Posterior vena cava (tissue), 2 donors: ENCODE measurements at regions of chr12 and their contacts with region 1.

Region 1: GRCh38 chr12:130904064-130904463 is 32.2 kb downstream of the RAN start:
- DNase-seq: no peak

Region 2: DNA sequence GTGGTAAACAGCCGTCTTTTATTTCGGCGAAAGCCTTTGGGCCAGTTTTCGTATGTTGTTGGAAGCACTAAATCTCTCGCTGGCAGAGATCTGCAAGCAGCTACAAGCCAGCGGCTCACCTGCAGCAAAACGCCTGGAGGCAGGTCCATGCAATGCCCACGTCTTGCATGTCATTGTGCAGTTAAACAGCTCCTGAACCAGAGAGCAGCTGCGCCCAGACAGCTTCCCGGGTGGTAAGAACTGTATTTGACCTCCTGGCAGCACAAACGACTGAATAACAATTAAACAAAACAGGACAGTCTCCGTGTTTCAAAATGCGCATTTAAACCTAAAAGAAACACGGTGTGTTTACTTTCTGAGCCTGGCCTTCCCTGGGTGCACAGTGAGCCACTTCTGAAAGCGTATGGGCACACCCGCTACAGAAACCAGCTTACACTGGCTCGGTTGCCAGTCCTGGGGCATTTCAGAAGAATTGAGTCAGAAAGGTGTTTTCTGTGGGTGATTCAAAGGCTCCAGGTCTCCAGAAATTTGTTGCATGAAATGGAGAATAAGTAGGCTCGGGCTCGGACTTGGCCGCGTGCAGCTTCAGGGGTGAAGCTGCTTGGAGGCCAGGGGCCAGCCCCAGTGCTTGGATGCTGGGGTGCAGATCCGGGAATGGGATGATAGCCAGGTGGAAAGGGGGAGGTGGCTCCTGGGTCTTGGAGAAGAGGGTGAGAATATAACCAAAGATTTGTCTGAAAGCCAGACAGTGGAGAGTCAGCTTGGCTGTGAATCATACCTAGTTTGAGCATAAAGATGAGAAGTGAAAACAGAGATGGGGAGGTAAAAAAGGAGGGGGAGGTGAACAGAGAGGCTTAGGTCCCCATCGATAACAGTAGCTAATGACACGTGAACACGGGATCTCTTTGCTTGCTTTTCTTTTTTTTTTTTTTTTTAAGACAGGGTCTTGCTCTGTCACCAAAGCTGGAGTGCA is 766.7 kb before region 1 on chr12:
- intact Hi-C with region 1: no loop called
- DNase-seq: no peak

Region 3: GRCh38 chr12:130764475-130765185 is 139.4 kb before region 1 on chr12:
- intact Hi-C with region 1: no loop called
- DNase-seq: no peak

Region 4: DNA sequence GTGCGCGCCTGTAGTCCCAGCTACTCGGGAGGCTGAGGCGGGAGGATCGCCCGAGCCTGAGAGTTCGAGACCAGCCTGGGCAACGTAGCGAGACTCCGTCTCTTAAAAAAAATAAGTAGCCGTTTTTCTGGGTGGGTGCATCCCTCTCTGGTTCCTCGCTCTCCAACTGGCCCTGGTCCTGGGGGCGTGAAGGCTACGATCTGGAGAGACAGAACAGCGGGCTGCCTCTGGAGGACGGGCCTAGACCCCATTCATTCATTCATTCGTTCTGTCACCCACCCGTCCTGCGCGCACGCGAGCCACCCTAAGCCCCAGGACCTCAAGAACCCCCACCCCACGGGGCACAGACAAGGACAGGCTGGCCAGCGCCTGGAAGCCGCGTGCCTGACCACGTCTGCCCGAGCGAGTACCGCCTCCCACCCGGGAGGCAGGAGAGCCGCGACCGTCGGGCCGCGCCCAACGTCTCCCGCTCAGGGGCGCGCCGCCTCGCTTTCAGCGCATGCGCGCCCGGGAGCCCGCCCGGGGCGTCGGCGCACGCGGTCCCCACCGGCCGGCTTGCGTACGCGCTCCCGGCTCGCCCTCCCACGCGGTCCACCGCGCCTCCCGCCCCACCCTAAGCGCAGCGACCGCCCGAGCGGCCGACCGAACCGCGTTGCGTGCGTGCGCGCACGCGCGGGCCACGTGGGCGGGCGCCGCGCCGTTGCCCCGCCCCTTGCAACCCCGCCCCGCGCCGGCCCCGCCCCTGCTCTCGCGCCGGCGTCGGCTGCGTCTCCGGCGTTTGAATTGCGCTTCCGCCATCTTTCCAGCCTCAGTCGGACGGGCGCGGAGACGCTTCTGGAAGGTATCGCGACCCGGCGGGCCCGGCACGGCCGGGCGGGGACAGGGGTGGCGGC is 32.5 kb before region 1 on chr12 and contains the start of gene RAN:
- intact Hi-C with region 1: no loop called
- DNase-seq: peak; percentile 98
- total RNA-seq, gene RAN: 288 to 326 TPM

Region 5: GRCh38 chr12:131323879-131324278 is 419.8 kb after region 1 on chr12:
- intact Hi-C with region 1: no loop called
- DNase-seq: no peak

Region 6: DNA sequence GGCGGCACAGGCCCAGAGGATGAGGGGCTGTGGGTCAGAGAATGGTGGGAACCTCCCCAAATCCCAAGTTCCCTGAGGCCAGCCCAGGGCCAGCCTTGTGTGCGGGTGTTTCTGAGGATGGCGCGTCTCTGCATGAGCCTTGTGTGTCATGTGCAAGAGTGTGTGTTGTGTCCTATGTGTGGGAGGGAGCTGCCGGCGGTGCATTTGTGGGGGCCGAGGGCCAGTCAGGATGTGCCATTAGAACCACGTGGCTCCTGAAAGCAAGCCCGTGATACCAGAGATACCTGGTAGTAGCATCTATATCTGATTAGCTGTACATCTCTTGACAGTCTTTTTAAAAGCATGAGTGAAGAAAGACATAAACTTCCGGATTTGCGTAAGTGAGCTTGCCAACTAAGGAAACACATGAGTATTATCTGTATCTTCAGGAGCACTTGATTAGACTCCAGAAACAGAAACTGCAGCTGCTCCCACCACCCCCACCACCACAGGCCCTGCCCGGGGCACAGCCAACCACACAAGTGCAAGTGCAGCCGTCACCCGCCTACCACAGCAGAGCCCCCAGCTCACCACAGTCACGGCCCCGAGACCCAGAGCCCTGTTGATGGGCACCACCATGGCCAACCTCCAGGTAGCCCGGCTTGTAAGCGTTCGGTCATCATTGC is 1220.8 kb after region 1 on chr12:
- intact Hi-C with region 1: loop called in 1 of 2 experiments (anchors 5 kb)
- DNase-seq: peak; percentile 81